ENCODE measurements at regions of chr4 and their contacts with region 1.

Region 1: GRCh38 chr4:2811830-2812611 is 19.1 kb downstream of the SH3BP2 start:
- DNase-seq: peak; percentile 87
- ATAC-seq: peak; percentile 79
- H3K4me3 ChIP-seq: peak overlapping the region; percentile 32 to 90 (median 74)
- H3K4me3 Mint-ChIP-seq: peak overlapping the region; percentile 80
- H3K27ac ChIP-seq: peak overlapping the region; percentile 89
- H3K27ac Mint-ChIP-seq: peak overlapping the region; percentile 98
- H3K4me1 ChIP-seq: peaks cover 90 to 94% of the 10 kb centered on the region in 2 donors
- H3K4me1 Mint-ChIP-seq: peaks cover 84% of the 10 kb centered on the region
- H3K27me3 ChIP-seq: no peaks in the 10 kb centered on the region
- H3K27me3 Mint-ChIP-seq: no peaks in the 10 kb centered on the region
- CTCF ChIP-seq: no peak

Region 2: GRCh38 chr4:2771264-2771663 is 40.8 kb before region 1 on chr4:
- CTCF ChIA-PET with region 1: no interaction called
- POLR2A ChIA-PET with region 1: no interaction called
- intact Hi-C with region 1: loop called (anchors 5 kb)
- DNase-seq: no peak
- ATAC-seq: no peak
- H3K4me3 ChIP-seq: no peak overlapping the region
- H3K4me3 Mint-ChIP-seq: no peak overlapping the region
- H3K27ac ChIP-seq: no peak overlapping the region
- H3K27ac Mint-ChIP-seq: no peak overlapping the region
- H3K4me1 ChIP-seq: peaks cover 0 to 9% of the 10 kb centered on the region in 2 donors
- H3K4me1 Mint-ChIP-seq: peaks cover 13% of the 10 kb centered on the region
- H3K27me3 ChIP-seq: no peaks in the 10 kb centered on the region
- H3K27me3 Mint-ChIP-seq: no peaks in the 10 kb centered on the region
- CTCF ChIP-seq: no peak

Region 3: GRCh38 chr4:2787230-2788088 is 24.6 kb before region 1 on chr4:
- CTCF ChIA-PET with region 1: interaction called, 3 read pairs
- POLR2A ChIA-PET with region 1: interaction called, 7 read pairs
- intact Hi-C with region 1: loop called (anchors 1 kb)
- DNase-seq: peak; percentile 90
- ATAC-seq: peak; percentile 52
- H3K4me3 ChIP-seq: peak overlapping the region in 2 of 5 experiments; percentile 10 to 20
- H3K4me3 Mint-ChIP-seq: peak overlapping the region; percentile 74
- H3K27ac ChIP-seq: peak overlapping the region; percentile 99
- H3K27ac Mint-ChIP-seq: peak overlapping the region; percentile 94
- H3K4me1 ChIP-seq: peaks cover 67 to 72% of the 10 kb centered on the region in 2 donors
- H3K4me1 Mint-ChIP-seq: peaks cover 70% of the 10 kb centered on the region
- H3K27me3 ChIP-seq: no peaks in the 10 kb centered on the region
- H3K27me3 Mint-ChIP-seq: no peaks in the 10 kb centered on the region
- CTCF ChIP-seq: no peak

Region 4: DNA sequence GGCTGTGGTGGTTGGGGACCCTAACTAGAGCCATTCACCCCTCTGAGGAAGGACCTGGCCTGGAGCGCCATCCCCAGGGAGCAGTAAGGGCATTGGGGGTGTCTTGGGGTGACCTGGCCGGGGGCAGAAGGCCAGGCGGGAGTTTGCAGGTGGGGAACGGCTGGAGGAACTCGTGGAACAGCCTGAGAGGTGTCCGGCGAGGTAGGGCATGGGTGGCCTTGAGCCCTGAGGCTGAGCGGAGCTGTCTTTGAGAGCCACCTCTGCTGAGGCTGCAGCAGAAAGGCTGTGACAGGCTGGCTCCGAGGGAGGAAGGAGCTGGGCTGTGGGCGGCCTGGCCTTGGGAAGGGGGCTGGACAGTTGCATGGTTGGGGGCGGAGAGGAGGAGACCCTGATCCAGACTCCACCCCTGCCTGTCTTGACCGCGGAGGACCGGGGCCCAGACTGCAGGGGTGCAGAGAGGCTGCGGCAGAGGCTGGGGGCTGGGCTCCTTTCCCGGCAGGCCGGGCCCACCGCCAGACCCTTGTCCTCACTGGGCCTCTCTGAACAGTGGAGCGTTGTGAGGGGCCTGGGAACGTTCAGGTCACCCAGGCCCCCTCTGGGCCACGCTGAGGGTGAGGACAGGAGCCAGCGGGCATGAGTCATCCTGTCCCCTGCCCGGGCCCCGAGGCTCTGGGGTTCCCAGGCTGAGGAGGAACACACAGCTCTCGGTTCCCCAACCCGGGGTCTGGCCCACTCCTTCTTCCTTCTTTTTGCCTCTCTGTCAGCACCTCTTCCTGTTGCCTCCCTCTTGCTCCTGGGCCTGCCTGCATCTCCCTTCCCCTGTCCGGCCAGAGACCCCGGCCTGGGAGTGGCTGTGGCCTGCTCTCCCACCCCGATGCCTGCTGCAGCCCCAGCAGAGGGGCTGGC is 11.1 kb before region 1 on chr4:
- CTCF ChIA-PET with region 1: interaction called, 9 read pairs
- POLR2A ChIA-PET with region 1: interaction called, 18 read pairs
- intact Hi-C with region 1: loop called (anchors 2 kb)
- DNase-seq: peak; percentile 74
- ATAC-seq: peak; percentile 70
- H3K4me3 ChIP-seq: peak overlapping the region; percentile 12 to 67 (median 59)
- H3K4me3 Mint-ChIP-seq: peak overlapping the region; percentile 78
- H3K27ac ChIP-seq: peak overlapping the region; percentile 76 to 83
- H3K27ac Mint-ChIP-seq: peak overlapping the region; percentile 86
- H3K4me1 ChIP-seq: peaks cover 81 to 95% of the 10 kb centered on the region in 2 donors
- H3K4me1 Mint-ChIP-seq: peaks cover 71% of the 10 kb centered on the region
- H3K27me3 ChIP-seq: no peaks in the 10 kb centered on the region
- H3K27me3 Mint-ChIP-seq: no peaks in the 10 kb centered on the region
- CTCF ChIP-seq: no peak

Region 5: DNA sequence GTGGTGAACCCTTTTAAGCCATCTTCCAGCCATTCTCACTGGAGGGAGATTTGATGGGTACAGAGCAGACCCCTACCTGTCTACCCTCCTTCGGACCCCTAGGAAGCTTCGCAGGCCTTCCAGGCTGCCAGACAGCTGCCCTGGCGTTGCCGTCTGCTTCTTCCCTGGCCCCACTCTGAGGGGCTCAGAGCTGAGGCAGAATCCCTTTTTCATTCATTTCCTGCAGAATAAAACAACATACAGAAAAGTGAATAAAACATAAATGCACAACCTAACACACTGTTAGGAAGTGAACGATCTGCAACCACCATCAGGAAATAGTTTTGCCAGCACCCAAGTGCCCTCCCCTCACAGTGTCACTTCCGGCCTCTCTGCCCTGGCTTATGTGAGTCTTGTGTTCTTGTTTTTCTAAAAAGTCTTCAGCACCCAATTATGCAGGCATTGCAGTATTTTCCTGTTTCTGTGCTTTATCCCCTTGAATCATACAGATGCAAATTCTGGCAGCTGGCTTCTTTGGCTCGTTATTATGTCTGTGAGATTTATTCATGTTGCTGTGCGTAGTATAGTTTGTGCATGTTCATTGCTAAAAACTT is 26.0 kb after region 1 on chr4:
- CTCF ChIA-PET with region 1: interaction called, 3 read pairs
- POLR2A ChIA-PET with region 1: interaction called, 5 read pairs
- intact Hi-C with region 1: loop called (anchors 1 kb)
- DNase-seq: peak; percentile 81
- ATAC-seq: peak; percentile 58
- H3K4me3 ChIP-seq: peak overlapping the region in 4 of 5 experiments; percentile 18 to 51 (median 34)
- H3K4me3 Mint-ChIP-seq: peak overlapping the region; percentile 71
- H3K27ac ChIP-seq: peak overlapping the region; percentile 78
- H3K27ac Mint-ChIP-seq: peak overlapping the region; percentile 63
- H3K4me1 ChIP-seq: peaks cover 70 to 76% of the 10 kb centered on the region in 2 donors
- H3K4me1 Mint-ChIP-seq: peaks cover 72% of the 10 kb centered on the region
- H3K27me3 ChIP-seq: no peaks in the 10 kb centered on the region
- H3K27me3 Mint-ChIP-seq: no peaks in the 10 kb centered on the region
- CTCF ChIP-seq: no peak